ENCODE measurements at regions of chr21 and their contacts with region 1.

Region 1: GRCh38 chr21:25639551-25640201 is 618 bp downstream of the JAM2 start:
- DNase-seq: peak; percentile 42 to 83 (median 80)
- ATAC-seq: peak; percentile 89 to 91
- H3K4me3 ChIP-seq: peak overlapping the region; percentile 77
- H3K27ac ChIP-seq: peak overlapping the region; percentile 70
- H3K4me1 ChIP-seq: peaks cover 2% of the 10 kb centered on the region
- H3K27me3 ChIP-seq: no peaks in the 10 kb centered on the region

Region 2: GRCh38 chr21:25607151-25608043 is 32.3 kb before region 1 on chr21 and contains the start of gene MRPL39:
- intact Hi-C with region 1: loop called in 1 of 4 experiments (anchors 2 kb)
- DNase-seq: peak; percentile 89 to 95 (median 94)
- ATAC-seq: peak; percentile 98
- H3K4me3 ChIP-seq: peak within 1 kb of the TSS; percentile 65
- H3K27ac ChIP-seq: peak within 1 kb of the TSS; percentile 76
- H3K4me1 ChIP-seq: no peaks in the 10 kb centered on the region
- H3K27me3 ChIP-seq: no peaks in the 10 kb centered on the region
- total RNA-seq, gene MRPL39: 30.6 to 38.3 (median 34.5) TPM

Region 3: DNA sequence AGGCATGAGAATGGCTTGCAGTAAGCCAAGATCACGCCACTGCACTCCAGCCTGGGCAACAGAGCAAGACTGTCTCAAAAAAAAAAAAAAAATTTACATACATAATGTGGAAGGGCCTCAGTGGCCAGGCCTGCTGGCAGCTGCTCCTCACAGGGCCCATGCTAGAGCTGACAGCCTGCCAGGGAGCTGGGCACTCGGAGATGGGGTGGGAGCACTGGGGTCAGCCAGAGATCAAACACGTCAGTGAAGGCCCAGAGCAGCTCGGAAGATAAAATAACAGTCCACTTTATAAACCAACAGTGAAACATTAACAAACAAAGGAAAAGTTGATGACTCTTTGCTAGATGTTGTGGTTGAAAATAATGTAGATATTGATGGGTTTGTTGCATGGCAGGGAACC is 52.3 kb after region 1 on chr21:
- intact Hi-C with region 1: loop called in 1 of 4 experiments (anchors 10 kb)
- DNase-seq: peak in 2 of 3 donors; percentile 21 to 58
- ATAC-seq: peak in 1 of 2 donors; percentile 70
- H3K4me3 ChIP-seq: no peak overlapping the region
- H3K27ac ChIP-seq: no peak overlapping the region
- H3K4me1 ChIP-seq: peaks cover 3% of the 10 kb centered on the region
- H3K27me3 ChIP-seq: no peaks in the 10 kb centered on the region

Region 4: GRCh38 chr21:25708467-25709065 is 68.9 kb after region 1 on chr21:
- intact Hi-C with region 1: loop called in 1 of 4 experiments (anchors 10 kb)
- DNase-seq: no peak
- ATAC-seq: no peak
- H3K4me3 ChIP-seq: no peak overlapping the region
- H3K27ac ChIP-seq: no peak overlapping the region
- H3K4me1 ChIP-seq: no peaks in the 10 kb centered on the region
- H3K27me3 ChIP-seq: no peaks in the 10 kb centered on the region